MCF 10A (cell line): ENCODE measurements at regions of chr6 and their contacts with region 1.

Region 1: GRCh38 chr6:56570413-56571359 is 72.0 kb downstream of the DST start:
- DNase-seq: peak; percentile 46
- H3K4me3 Mint-ChIP-seq: no peak overlapping the region
- H3K27ac Mint-ChIP-seq: no peak overlapping the region
- H3K4me1 Mint-ChIP-seq: no peaks in the 10 kb centered on the region
- H3K27me3 Mint-ChIP-seq: no peaks in the 10 kb centered on the region
- CTCF ChIP-seq: peak; percentile 68

Region 2: GRCh38 chr6:56359201-56359899 is 211.3 kb before region 1 on chr6:
- CTCF ChIA-PET with region 1: no interaction called
- POLR2A ChIA-PET with region 1: interaction called, 3 read pairs
- intact Hi-C with region 1: loop called (anchors 1 kb)
- DNase-seq: peak; percentile 76
- H3K4me3 Mint-ChIP-seq: no peak overlapping the region
- H3K27ac Mint-ChIP-seq: no peak overlapping the region
- H3K4me1 Mint-ChIP-seq: peaks cover 4% of the 10 kb centered on the region
- H3K27me3 Mint-ChIP-seq: no peaks in the 10 kb centered on the region
- CTCF ChIP-seq: peak; percentile 81

Region 3: GRCh38 chr6:56581296-56581925 is 10.7 kb after region 1 on chr6:
- CTCF ChIA-PET with region 1: interaction called, 11 read pairs
- POLR2A ChIA-PET with region 1: interaction called, 8 read pairs
- intact Hi-C with region 1: no loop called
- DNase-seq: no peak
- H3K4me3 Mint-ChIP-seq: no peak overlapping the region
- H3K27ac Mint-ChIP-seq: no peak overlapping the region
- H3K4me1 Mint-ChIP-seq: no peaks in the 10 kb centered on the region
- H3K27me3 Mint-ChIP-seq: no peaks in the 10 kb centered on the region
- CTCF ChIP-seq: no peak